PC-3 (cell line): ENCODE measurements at regions of chr5 and their contacts with region 1.

Region 1: DNA sequence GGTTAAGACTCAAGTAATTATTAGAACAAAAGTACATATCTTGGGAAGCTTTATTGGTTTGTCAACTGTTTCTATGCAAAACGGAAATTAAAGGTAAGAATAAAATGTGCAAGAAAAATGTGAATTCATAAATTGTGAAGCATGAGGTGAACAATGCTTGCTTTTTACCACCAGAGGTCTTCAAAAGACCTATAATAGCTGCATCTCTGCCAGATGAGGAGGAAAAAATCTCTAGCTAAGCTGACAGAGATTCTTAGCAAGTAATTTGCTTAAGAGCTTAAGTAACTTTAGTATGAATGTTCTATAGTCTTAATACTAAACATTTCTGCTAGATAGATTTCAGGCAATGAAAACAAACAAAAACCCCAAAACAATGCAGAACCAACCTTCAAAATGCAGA is 54.1 kb downstream of the MRPS30 start:
- DNase-seq: peak; percentile 68
- ATAC-seq: peak; percentile 79
- H3K4me3 ChIP-seq: no peak overlapping the region
- H3K27ac ChIP-seq: no peak overlapping the region
- H3K4me1 ChIP-seq: no peaks in the 10 kb centered on the region
- H3K27me3 ChIP-seq: no peaks in the 10 kb centered on the region
- CTCF ChIP-seq: peak; percentile 90

Region 2: GRCh38 chr5:44646016-44646415 is 216.8 kb before region 1 on chr5:
- CTCF ChIA-PET with region 1: no interaction called
- POLR2A ChIA-PET with region 1: no interaction called
- intact Hi-C with region 1: no loop called
- DNase-seq: no peak
- ATAC-seq: no peak
- H3K4me3 ChIP-seq: no peak overlapping the region
- H3K27ac ChIP-seq: no peak overlapping the region
- H3K4me1 ChIP-seq: no peaks in the 10 kb centered on the region
- H3K27me3 ChIP-seq: peaks cover 10% of the 10 kb centered on the region
- CTCF ChIP-seq: no peak

Region 3: GRCh38 chr5:44808435-44809214 is 54.2 kb before region 1 on chr5 and contains the start of gene MRPS30:
- CTCF ChIA-PET with region 1: no interaction called
- POLR2A ChIA-PET with region 1: no interaction called
- intact Hi-C with region 1: no loop called
- DNase-seq: peak; percentile 100
- ATAC-seq: peak; percentile 94
- H3K4me3 ChIP-seq: peak within 1 kb of the TSS; percentile 91
- H3K27ac ChIP-seq: peak within 1 kb of the TSS; percentile 51
- H3K4me1 ChIP-seq: peaks cover 29% of the 10 kb centered on the region
- H3K27me3 ChIP-seq: no peaks in the 10 kb centered on the region
- CTCF ChIP-seq: peak; percentile 77
- total RNA-seq, gene MRPS30: 139 and 149 TPM in 2 replicates

Region 4: GRCh38 chr5:44887722-44888121 is 24.9 kb after region 1 on chr5:
- CTCF ChIA-PET with region 1: no interaction called
- POLR2A ChIA-PET with region 1: no interaction called
- intact Hi-C with region 1: no loop called
- DNase-seq: no peak
- ATAC-seq: peak; percentile 31; the same call in 1 of the 2 replicates
- H3K4me3 ChIP-seq: no peak overlapping the region
- H3K27ac ChIP-seq: no peak overlapping the region
- H3K4me1 ChIP-seq: peaks cover 15% of the 10 kb centered on the region
- H3K27me3 ChIP-seq: no peaks in the 10 kb centered on the region
- CTCF ChIP-seq: no peak

Region 5: DNA sequence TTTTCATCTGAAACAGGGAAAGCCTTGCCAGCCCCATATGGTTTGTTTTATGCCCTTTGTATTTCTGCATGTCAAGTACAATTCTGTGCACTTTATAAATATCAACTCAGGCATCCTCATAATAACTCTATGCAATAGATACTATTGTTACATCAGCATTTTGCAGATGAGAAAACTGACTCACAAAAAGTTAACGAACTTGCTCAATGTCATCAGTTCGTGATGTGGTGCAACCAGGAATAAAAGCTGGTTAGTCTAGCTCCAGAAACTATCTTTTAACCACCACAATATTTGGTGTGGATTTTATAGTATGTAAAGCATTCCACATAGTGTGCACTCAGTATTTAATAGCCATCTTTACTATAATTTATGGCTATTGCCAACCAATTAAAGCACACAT is 80.8 kb after region 1 on chr5:
- CTCF ChIA-PET with region 1: no interaction called
- POLR2A ChIA-PET with region 1: no interaction called
- intact Hi-C with region 1: loop called (anchors 2 kb)
- DNase-seq: no peak
- ATAC-seq: no peak
- H3K4me3 ChIP-seq: no peak overlapping the region
- H3K27ac ChIP-seq: no peak overlapping the region
- H3K4me1 ChIP-seq: peaks cover 15% of the 10 kb centered on the region
- H3K27me3 ChIP-seq: no peaks in the 10 kb centered on the region
- CTCF ChIP-seq: no peak

Region 6: DNA sequence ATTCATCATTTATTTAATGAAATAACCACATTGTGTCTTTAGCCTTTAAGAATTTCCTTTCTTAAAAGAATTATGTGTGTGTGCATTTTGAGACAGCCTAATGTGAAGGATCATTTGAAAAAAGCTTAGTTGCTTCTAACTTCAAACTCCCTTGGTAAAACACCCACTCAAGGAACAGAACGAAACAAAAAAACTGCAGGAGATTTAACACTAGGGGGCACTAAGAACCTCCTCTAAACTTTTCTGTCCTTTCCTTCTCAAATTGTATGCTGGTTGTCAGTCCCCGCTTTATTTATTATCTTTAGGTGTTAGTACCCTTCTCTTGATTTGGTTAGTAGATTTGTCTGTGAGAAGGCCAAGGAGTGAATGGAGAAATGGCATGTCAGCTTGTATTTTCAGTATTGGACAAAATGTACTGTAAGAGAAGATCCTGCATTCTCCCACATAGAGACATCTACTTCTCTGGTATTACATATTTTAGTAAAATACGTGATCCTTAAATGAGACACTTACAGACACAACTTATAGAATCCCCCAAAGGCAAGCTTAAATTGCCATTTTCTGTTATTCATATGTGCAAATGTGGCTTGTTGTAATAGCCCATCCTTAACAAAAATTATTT is 175.7 kb after region 1 on chr5:
- CTCF ChIA-PET with region 1: interaction called, 5 read pairs
- POLR2A ChIA-PET with region 1: no interaction called
- intact Hi-C with region 1: loop called (anchors 2 kb)
- DNase-seq: peak; percentile 71
- ATAC-seq: peak; percentile 67
- H3K4me3 ChIP-seq: no peak overlapping the region
- H3K27ac ChIP-seq: no peak overlapping the region
- H3K4me1 ChIP-seq: no peaks in the 10 kb centered on the region
- H3K27me3 ChIP-seq: no peaks in the 10 kb centered on the region
- CTCF ChIP-seq: peak; percentile 85

Region 7: DNA sequence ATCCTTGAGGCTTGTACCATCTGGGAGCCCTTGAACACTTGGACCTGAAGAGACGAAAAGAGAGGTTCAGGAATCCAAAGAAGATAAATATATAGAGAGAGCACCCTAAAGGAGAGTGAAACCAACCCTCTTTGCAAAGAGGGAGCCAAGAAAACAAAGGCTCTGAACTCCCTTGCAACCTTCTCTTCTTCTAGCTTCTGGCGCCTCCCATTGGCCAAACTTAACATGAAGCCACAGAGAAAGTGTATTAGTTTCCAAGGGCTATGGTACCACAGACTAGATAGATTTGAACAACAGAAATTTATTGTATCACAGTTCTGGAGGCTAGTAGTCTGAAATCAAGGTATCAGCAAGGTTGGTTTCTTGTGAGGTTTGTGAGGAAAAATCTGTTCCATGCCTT is 658.3 kb after region 1 on chr5:
- CTCF ChIA-PET with region 1: no interaction called
- POLR2A ChIA-PET with region 1: no interaction called
- intact Hi-C with region 1: loop called (anchors 1 kb)
- DNase-seq: peak; percentile 35
- ATAC-seq: peak; percentile 56; the same call in 1 of the 2 replicates
- H3K4me3 ChIP-seq: no peak overlapping the region
- H3K27ac ChIP-seq: no peak overlapping the region
- H3K4me1 ChIP-seq: no peaks in the 10 kb centered on the region
- H3K27me3 ChIP-seq: no peaks in the 10 kb centered on the region
- CTCF ChIP-seq: peak; percentile 56

Region 8: DNA sequence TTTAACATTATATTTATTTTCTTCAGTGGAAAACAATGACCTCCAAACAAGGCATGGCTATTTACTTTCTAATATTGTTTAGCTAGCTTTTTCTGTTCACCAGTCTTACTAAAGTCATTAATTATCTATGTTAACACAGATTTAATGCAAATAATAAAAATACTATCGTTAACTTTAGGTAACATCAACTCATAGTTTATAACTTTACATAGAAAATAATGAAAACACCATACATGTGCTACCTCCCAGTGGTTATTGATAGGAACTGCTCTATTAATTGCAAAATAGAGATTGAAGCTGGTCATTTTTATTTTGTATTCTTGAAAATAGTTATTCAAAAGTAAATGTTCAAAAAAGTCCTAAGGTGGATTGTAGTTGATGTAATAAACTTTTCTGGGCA is 911.7 kb after region 1 on chr5:
- CTCF ChIA-PET with region 1: no interaction called
- POLR2A ChIA-PET with region 1: no interaction called
- intact Hi-C with region 1: loop called (anchors 10 kb)
- DNase-seq: peak; percentile 40
- ATAC-seq: no peak
- H3K4me3 ChIP-seq: no peak overlapping the region
- H3K27ac ChIP-seq: no peak overlapping the region
- H3K4me1 ChIP-seq: no peaks in the 10 kb centered on the region
- H3K27me3 ChIP-seq: no peaks in the 10 kb centered on the region
- CTCF ChIP-seq: peak; percentile 74